GM23248 (cell line): ENCODE measurements at regions of chr1 and their contacts with region 1.

Region 1: DNA sequence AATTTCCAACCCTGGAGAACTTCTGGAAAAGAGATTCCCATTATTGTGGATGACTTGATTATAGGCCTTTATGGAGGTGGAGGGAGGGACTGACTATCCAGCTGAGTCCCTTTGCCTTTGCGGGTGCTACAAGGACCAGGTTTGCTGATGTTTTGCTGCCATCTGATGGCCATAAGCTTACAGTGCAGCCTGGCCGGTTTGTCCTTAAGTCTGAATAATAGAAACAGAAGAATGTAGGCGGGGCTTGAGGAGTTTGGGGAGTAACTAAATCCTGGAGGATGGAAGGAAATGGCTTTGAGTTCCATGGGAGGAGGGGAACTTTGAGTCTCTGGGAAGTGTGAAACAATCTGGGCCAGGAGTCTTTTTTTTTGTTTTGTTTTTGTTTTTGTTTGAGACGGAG is 55.7 kb upstream of the CD1D start:
- DNase-seq: peak; percentile 96
- H3K4me3 ChIP-seq: no peak overlapping the region
- H3K27ac ChIP-seq: no peak overlapping the region
- H3K4me1 ChIP-seq: no peaks in the 10 kb centered on the region
- H3K27me3 ChIP-seq: no peaks in the 10 kb centered on the region

Region 2: GRCh38 chr1:157580179-157580827 is 544.7 kb before region 1 on chr1:
- in situ Hi-C with region 1: loop called (anchors 10 kb)
- DNase-seq: peak; percentile 44
- H3K4me3 ChIP-seq: no peak overlapping the region
- H3K27ac ChIP-seq: no peak overlapping the region
- H3K4me1 ChIP-seq: no peaks in the 10 kb centered on the region
- H3K27me3 ChIP-seq: peaks cover 12% of the 10 kb centered on the region; the same call in 1 of the 2 replicates